Natural killer cell (primary cell): ENCODE measurements at regions of chr16 and their contacts with region 1.

Region 1: GRCh38 chr16:21184834-21185233 is 26.4 kb downstream of the LDAF1 start:
- DNase-seq: no peak
- ATAC-seq: no peak
- H3K4me3 ChIP-seq: no peak overlapping the region
- H3K4me3 Mint-ChIP-seq: no peak overlapping the region
- H3K27ac ChIP-seq: no peak overlapping the region
- H3K27ac Mint-ChIP-seq: no peak overlapping the region
- H3K4me1 ChIP-seq: peaks cover 7% of the 10 kb centered on the region
- H3K4me1 Mint-ChIP-seq: peaks cover 5% of the 10 kb centered on the region in 2 donors
- H3K27me3 ChIP-seq: peaks cover 2% of the 10 kb centered on the region
- H3K27me3 Mint-ChIP-seq: peaks cover 0 to 4% of the 10 kb centered on the region in 2 donors
- CTCF ChIP-seq: no peak

Region 2: GRCh38 chr16:21565861-21566669 is 381.2 kb after region 1 on chr16:
- intact Hi-C with region 1: loop called (anchors 10 kb)
- DNase-seq: peak in 1 of 2 donors; percentile 18
- ATAC-seq: peak in 2 of 3 donors; percentile 23 to 54
- H3K4me3 ChIP-seq: no peak overlapping the region
- H3K4me3 Mint-ChIP-seq: no peak overlapping the region
- H3K27ac ChIP-seq: no peak overlapping the region
- H3K27ac Mint-ChIP-seq: peak overlapping the region in 1 of 2 donors; percentile 41
- H3K4me1 ChIP-seq: peaks cover 7% of the 10 kb centered on the region
- H3K4me1 Mint-ChIP-seq: peaks cover 4 to 8% of the 10 kb centered on the region in 2 donors
- H3K27me3 ChIP-seq: no peaks in the 10 kb centered on the region
- H3K27me3 Mint-ChIP-seq: peaks cover 0 to 6% of the 10 kb centered on the region in 2 donors
- CTCF ChIP-seq: no peak